Sciatic nerve (tissue), 2 donors: ENCODE measurements at regions of chr12 and their contacts with region 1.

Region 1: GRCh38 chr12:122635471-122635870 is 67.7 kb downstream of the HCAR2 start:
- DNase-seq: no peak
- ATAC-seq: no peak

Region 2: GRCh38 chr12:120984351-120984898 is 1651.0 kb before region 1 on chr12:
- intact Hi-C with region 1: no loop called
- DNase-seq: no peak
- ATAC-seq: no peak

Region 3: GRCh38 chr12:122752464-122753318 is 117.2 kb after region 1 on chr12 and contains the start of gene DENR:
- intact Hi-C with region 1: loop called (anchors 5 kb)
- DNase-seq: peak; percentile 99
- ATAC-seq: peak; percentile 99
- total RNA-seq, gene DENR: 32.7 TPM